Transverse colon (tissue), 4 donors: ENCODE measurements at regions of chr4 and their contacts with region 1.

Region 1: DNA sequence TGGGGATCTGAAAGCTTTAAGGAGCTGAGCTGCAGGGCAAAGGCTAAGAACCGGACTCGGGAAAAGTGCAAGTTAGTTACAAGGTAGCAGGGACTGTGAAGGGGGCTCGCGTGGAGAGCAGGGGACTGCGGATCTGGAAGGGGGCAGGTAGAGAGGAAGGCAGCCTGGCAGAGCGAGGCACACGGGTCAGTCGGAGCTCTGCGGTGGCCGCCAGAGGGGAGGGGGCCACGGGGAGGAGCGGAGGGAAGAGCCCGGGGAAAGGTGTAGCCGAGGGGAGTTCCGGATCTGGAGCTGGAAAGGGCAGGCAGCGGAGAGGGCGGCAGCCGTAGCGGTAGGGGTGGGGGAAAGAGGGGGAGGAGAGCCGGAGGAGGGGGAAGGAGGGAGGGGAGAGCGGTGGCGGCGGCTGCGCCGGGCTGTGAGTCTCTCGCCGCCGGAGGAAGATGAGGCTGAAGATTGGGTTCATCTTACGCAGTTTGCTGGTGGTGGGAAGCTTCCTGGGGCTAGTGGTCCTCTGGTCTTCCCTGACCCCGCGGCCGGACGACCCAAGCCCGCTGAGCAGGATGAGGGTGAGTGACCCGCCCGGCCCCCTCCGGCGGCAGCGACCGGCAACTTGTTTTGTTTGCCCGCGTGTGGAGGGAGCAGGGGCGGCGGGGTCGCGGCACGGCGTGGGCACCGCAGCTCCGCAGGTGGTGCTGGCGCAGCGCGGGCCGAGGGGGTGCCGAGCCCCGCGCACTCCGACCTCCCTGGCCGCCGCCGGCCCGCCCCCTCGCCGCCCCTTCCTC is at the start of gene GALNT7:
- DNase-seq: peak; percentile 83
- H3K4me3 ChIP-seq: peak within 1 kb of the TSS; percentile 89 to 98 (median 92)
- H3K27ac ChIP-seq: peak within 1 kb of the TSS; percentile 96 to 98 (median 98)
- H3K4me1 ChIP-seq: peaks cover 8 to 26% (median 21%) of the 10 kb centered on the region in 4 donors
- H3K27me3 ChIP-seq: no peaks in the 10 kb centered on the region
- CTCF ChIP-seq: no peak
- EP300 ChIP-seq: no peak
- POLR2A ChIP-seq: no peak
- total RNA-seq, gene GALNT7: 31.4 to 124 (median 105) TPM

Region 2: GRCh38 chr4:173025131-173025530 is 143.5 kb before region 1 on chr4:
- in situ Hi-C with region 1: loop called in 1 of 4 experiments (anchors 25 kb)
- intact Hi-C with region 1: loop called (anchors 10 kb)
- DNase-seq: peak; percentile 26
- H3K4me3 ChIP-seq: no peak overlapping the region
- H3K27ac ChIP-seq: no peak overlapping the region
- H3K4me1 ChIP-seq: no peaks in the 10 kb centered on the region
- H3K27me3 ChIP-seq: no peaks in the 10 kb centered on the region
- CTCF ChIP-seq: peak; percentile 63 to 84 (median 76)
- EP300 ChIP-seq: no peak
- POLR2A ChIP-seq: no peak

Region 3: GRCh38 chr4:173231916-173232315 is 63.3 kb after region 1 on chr4:
- in situ Hi-C with region 1: loop called in 1 of 4 experiments (anchors 10 kb)
- intact Hi-C with region 1: no loop called
- DNase-seq: no peak
- H3K4me3 ChIP-seq: no peak overlapping the region
- H3K27ac ChIP-seq: no peak overlapping the region
- H3K4me1 ChIP-seq: peaks cover 0 to 34% (median 5%) of the 10 kb centered on the region in 4 donors
- H3K27me3 ChIP-seq: no peaks in the 10 kb centered on the region
- CTCF ChIP-seq: peak in 4 of 5 experiments; percentile 10 to 25 (median 22)
- EP300 ChIP-seq: no peak
- POLR2A ChIP-seq: no peak

Region 4: DNA sequence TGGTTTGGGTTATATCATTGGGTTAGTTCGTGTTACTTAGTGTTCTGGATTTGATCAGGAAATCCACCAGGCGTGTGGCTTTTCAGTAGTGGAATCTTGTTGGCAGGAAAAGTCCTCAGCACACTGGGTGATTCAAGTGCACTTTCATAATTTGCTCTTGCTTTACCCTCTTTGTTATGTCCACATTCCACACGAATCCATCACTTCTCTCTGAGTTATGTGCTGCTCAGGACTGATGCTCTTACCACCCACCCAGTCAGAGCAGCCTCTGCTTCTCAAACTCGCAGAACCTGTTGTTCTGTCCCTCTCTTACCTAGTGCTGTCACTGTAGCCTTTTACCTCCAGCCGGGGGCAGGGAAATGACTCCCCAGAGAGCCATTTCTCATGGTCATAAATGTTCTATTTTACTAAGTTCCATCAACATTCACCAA is 267.6 kb after region 1 on chr4:
- in situ Hi-C with region 1: no loop called
- intact Hi-C with region 1: no loop called
- DNase-seq: no peak
- H3K4me3 ChIP-seq: no peak overlapping the region
- H3K27ac ChIP-seq: peak overlapping the region in 3 of 4 donors; percentile 53 to 68 (median 60)
- H3K4me1 ChIP-seq: peaks cover 0 to 5% (median 0%) of the 10 kb centered on the region in 4 donors
- H3K27me3 ChIP-seq: no peaks in the 10 kb centered on the region
- CTCF ChIP-seq: no peak
- EP300 ChIP-seq: no peak
- POLR2A ChIP-seq: no peak

Region 5: DNA sequence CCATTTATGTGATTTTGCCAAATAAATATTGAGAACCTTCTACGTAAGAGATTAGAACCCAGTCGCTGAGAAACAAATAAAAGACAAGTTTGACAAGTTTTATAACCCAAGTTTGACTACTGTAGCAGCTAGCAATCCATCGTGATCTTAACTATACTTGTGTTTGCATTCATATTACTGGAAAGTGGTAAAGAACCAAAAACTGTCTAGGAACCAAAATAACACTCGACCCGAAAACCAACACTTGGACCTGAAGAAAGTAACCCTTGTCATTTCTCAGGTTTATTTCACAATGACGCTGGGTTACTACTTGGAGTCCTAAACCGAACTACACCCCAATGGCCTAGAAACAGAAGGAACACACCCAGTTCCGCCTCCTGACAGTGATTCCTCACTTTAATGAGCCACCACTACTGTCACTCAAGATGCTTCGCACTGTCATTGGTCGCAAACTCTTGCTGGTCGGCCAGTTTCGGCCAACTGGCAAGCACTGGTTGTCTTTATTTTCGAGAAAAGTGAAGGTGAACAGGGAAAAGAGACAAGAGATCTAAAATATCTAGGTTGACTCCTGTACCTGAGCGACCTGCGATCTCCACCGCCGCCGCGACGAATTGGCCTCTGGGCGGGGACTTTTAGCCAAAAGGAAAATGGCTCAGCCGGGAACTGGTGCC is 1114.4 kb after region 1 on chr4:
- in situ Hi-C with region 1: no loop called
- intact Hi-C with region 1: no loop called
- DNase-seq: peak; percentile 84
- H3K4me3 ChIP-seq: peak overlapping the region; percentile 59 to 82 (median 76)
- H3K27ac ChIP-seq: peak overlapping the region; percentile 92 to 99 (median 96)
- H3K4me1 ChIP-seq: peaks cover 0 to 58% (median 21%) of the 10 kb centered on the region in 4 donors
- H3K27me3 ChIP-seq: no peaks in the 10 kb centered on the region
- CTCF ChIP-seq: peak in 2 of 5 experiments; percentile 3 to 11
- EP300 ChIP-seq: no peak
- POLR2A ChIP-seq: peak; percentile 11